ENCODE measurements at regions of chr3 and their contacts with region 1.

Region 1: GRCh38 chr3:13479581-13480339 is at the start of gene HDAC11:
- DNase-seq: peak; percentile 95 to 97 (median 97)
- H3K4me3 ChIP-seq: peak within 1 kb of the TSS; percentile 76 to 79 (median 78)
- H3K4me3 Mint-ChIP-seq: peak within 1 kb of the TSS; percentile 88 to 94
- H3K27ac ChIP-seq: peak within 1 kb of the TSS; percentile 60 to 89
- H3K27ac Mint-ChIP-seq: peak within 1 kb of the TSS; percentile 90 to 97 (median 93)
- H3K4me1 ChIP-seq: peaks cover 22 to 34% of the 10 kb centered on the region in 2 donors
- H3K4me1 Mint-ChIP-seq: peaks cover 35% of the 10 kb centered on the region
- H3K27me3 ChIP-seq: no peaks in the 10 kb centered on the region
- H3K27me3 Mint-ChIP-seq: peaks cover 0 to 11% (median 4%) of the 10 kb centered on the region in 3 donors
- CTCF ChIP-seq: peak; percentile 18
- polyA plus RNA-seq, gene HDAC11: 2.9 to 3.9 (median 3.5) TPM

Region 2: GRCh38 chr3:12967606-12968351 is 512.0 kb before region 1 on chr3:
- intact Hi-C with region 1: loop called in 1 of 2 experiments (anchors 10 kb)
- DNase-seq: peak; percentile 78 to 91 (median 87)
- H3K4me3 ChIP-seq: peak overlapping the region in 2 of 3 experiments; percentile 7 to 69
- H3K4me3 Mint-ChIP-seq: peak overlapping the region; percentile 64 to 86
- H3K27ac ChIP-seq: no peak overlapping the region
- H3K27ac Mint-ChIP-seq: peak overlapping the region in 4 of 7 donors; percentile 31 to 52 (median 46)
- H3K4me1 ChIP-seq: peaks cover 33 to 52% of the 10 kb centered on the region in 2 donors
- H3K4me1 Mint-ChIP-seq: peaks cover 66% of the 10 kb centered on the region
- H3K27me3 ChIP-seq: peaks cover 0 to 6% of the 10 kb centered on the region in 2 donors
- H3K27me3 Mint-ChIP-seq: peaks cover 5 to 17% (median 16%) of the 10 kb centered on the region in 3 donors
- CTCF ChIP-seq: no peak